ENCODE measurements at regions of chr2 and their contacts with region 1.

Region 1: GRCh38 chr2:23404426-23404825 is 19.4 kb downstream of the KLHL29 start:
- DNase-seq: no peak
- ATAC-seq: peak; percentile 67
- H3K4me3 ChIP-seq: no peak overlapping the region
- H3K27ac ChIP-seq: peak overlapping the region in 1 of 2 donors; percentile 34
- H3K4me1 ChIP-seq: no peaks in the 10 kb centered on the region
- H3K27me3 ChIP-seq: no peaks in the 10 kb centered on the region

Region 2: GRCh38 chr2:23384551-23385349 is 19.7 kb before region 1 on chr2 and contains the start of gene KLHL29:
- intact Hi-C with region 1: loop called in 1 of 2 experiments (anchors 2 kb)
- DNase-seq: peak; percentile 90 to 96
- ATAC-seq: peak; percentile 77
- H3K4me3 ChIP-seq: peak within 1 kb of the TSS; percentile 45 to 92
- H3K27ac ChIP-seq: peak within 1 kb of the TSS in 1 of 2 donors; percentile 23
- H3K4me1 ChIP-seq: no peaks in the 10 kb centered on the region
- H3K27me3 ChIP-seq: no peaks in the 10 kb centered on the region
- total RNA-seq, gene KLHL29: 11.4 to 13.4 TPM

Region 3: DNA sequence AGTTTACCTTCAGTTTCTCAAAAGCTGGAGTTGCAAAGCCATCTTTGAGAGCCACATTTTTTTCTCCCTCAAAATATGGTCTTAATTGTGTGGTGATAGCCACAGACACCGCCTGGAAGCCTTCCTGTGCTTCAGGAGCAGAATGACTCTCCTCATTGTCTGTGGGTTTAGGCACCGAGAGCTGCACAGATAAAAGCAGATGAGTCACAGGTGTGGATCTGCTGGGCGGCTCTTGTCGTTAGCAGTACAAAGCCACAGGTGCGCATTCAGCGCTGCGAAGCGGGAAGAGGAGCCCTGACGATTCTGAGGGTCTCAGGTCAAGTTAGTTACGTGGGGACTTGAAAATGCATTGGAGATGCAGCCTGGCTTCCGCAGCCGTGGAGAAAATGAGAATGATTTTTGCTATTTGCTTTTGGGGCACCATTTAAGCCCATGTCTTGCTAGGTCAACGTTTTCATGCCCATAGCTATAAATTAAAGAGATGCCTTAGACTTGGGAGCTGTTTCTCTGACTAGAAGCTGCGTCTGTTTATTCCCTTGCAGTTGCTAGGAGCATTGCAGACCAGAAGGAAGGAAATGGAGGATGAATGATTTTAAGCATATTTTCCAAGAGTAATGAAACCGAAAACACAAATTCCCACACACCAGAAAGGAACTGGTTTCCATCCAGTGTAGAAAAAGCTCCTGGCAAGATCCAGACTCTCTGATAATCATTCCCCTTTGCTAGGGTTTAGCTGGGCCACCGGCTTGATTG is 32.1 kb after region 1 on chr2:
- intact Hi-C with region 1: no loop called
- DNase-seq: peak in 1 of 2 donors; percentile 35
- ATAC-seq: no peak
- H3K4me3 ChIP-seq: no peak overlapping the region
- H3K27ac ChIP-seq: peak overlapping the region in 1 of 2 donors; percentile 73
- H3K4me1 ChIP-seq: peaks cover 0 to 4% of the 10 kb centered on the region in 2 donors
- H3K27me3 ChIP-seq: no peaks in the 10 kb centered on the region

Region 4: GRCh38 chr2:23574919-23575654 is 170.7 kb after region 1 on chr2:
- intact Hi-C with region 1: loop called in 1 of 2 experiments (anchors 5 kb)
- DNase-seq: no peak
- ATAC-seq: no peak
- H3K4me3 ChIP-seq: no peak overlapping the region
- H3K27ac ChIP-seq: no peak overlapping the region
- H3K4me1 ChIP-seq: no peaks in the 10 kb centered on the region
- H3K27me3 ChIP-seq: no peaks in the 10 kb centered on the region

Measured in aorta (tissue), 5 donors.